Naive thymus-derived CD4-positive, alpha-beta T cell (primary cell): ENCODE measurements at regions of chr15 and their contacts with region 1.

Region 1: GRCh38 chr15:65286704-65287519 is at the start of gene PARP16:
- DNase-seq: peak; percentile 85 to 95 (median 87)
- ATAC-seq: peak; percentile 97
- H3K4me3 ChIP-seq: peak within 1 kb of the TSS; percentile 68
- H3K4me3 Mint-ChIP-seq: peak within 1 kb of the TSS; percentile 70 to 92 (median 90)
- H3K27ac ChIP-seq: peak within 1 kb of the TSS; percentile 87
- H3K27ac Mint-ChIP-seq: peak within 1 kb of the TSS; percentile 76 to 94 (median 87)
- H3K4me1 ChIP-seq: peaks cover 15 to 18% of the 10 kb centered on the region in 2 donors
- H3K4me1 Mint-ChIP-seq: peaks cover 30 to 60% (median 41%) of the 10 kb centered on the region in 7 donors
- H3K27me3 ChIP-seq: no peaks in the 10 kb centered on the region
- H3K27me3 Mint-ChIP-seq: no peaks in the 10 kb centered on the region
- total RNA-seq, gene PARP16: 10.9 to 21.5 (median 15.7) TPM

Region 2: GRCh38 chr15:64841258-64842095 is 445.4 kb before region 1 on chr15 and contains the start of gene PLEKHO2:
- CTCF ChIA-PET with region 1: no interaction called
- POLR2A ChIA-PET with region 1: no interaction called
- intact Hi-C with region 1: loop called in 1 of 2 experiments (anchors 5 kb)
- DNase-seq: peak; percentile 70 to 88 (median 80)
- ATAC-seq: peak; percentile 85
- H3K4me3 ChIP-seq: peak within 1 kb of the TSS; percentile 65
- H3K4me3 Mint-ChIP-seq: peak within 1 kb of the TSS; percentile 85 to 98 (median 96)
- H3K27ac ChIP-seq: peak within 1 kb of the TSS; percentile 81
- H3K27ac Mint-ChIP-seq: peak within 1 kb of the TSS; percentile 83 to 96 (median 91)
- H3K4me1 ChIP-seq: peaks cover 48 to 62% of the 10 kb centered on the region in 2 donors
- H3K4me1 Mint-ChIP-seq: peaks cover 63 to 89% (median 86%) of the 10 kb centered on the region in 7 donors
- H3K27me3 ChIP-seq: no peaks in the 10 kb centered on the region
- H3K27me3 Mint-ChIP-seq: no peaks in the 10 kb centered on the region
- total RNA-seq, gene PLEKHO2: 8.6 to 52.3 (median 14.0) TPM

Region 3: GRCh38 chr15:65049418-65049840 is 237.5 kb before region 1 on chr15:
- CTCF ChIA-PET with region 1: no interaction called
- POLR2A ChIA-PET with region 1: no interaction called
- intact Hi-C with region 1: loop called in 1 of 2 experiments (anchors 1 kb)
- DNase-seq: peak; percentile 59 to 89 (median 83)
- ATAC-seq: peak; percentile 99
- H3K4me3 ChIP-seq: peak overlapping the region; percentile 62
- H3K4me3 Mint-ChIP-seq: peak overlapping the region; percentile 63 to 88 (median 74)
- H3K27ac ChIP-seq: no peak overlapping the region
- H3K27ac Mint-ChIP-seq: peak overlapping the region in 7 of 9 donors; percentile 10 to 80 (median 63)
- H3K4me1 ChIP-seq: peaks cover 4 to 11% of the 10 kb centered on the region in 2 donors
- H3K4me1 Mint-ChIP-seq: peaks cover 0 to 18% (median 12%) of the 10 kb centered on the region in 7 donors
- H3K27me3 ChIP-seq: no peaks in the 10 kb centered on the region
- H3K27me3 Mint-ChIP-seq: peaks cover 0 to 10% (median 0%) of the 10 kb centered on the region in 5 donors

Region 4: GRCh38 chr15:65077981-65078352 is 208.9 kb before region 1 on chr15:
- CTCF ChIA-PET with region 1: no interaction called
- POLR2A ChIA-PET with region 1: no interaction called
- intact Hi-C with region 1: no loop called
- DNase-seq: peak in 8 of 9 donors; percentile 18 to 54 (median 39)
- ATAC-seq: peak; percentile 74
- H3K4me3 ChIP-seq: no peak overlapping the region
- H3K4me3 Mint-ChIP-seq: peak overlapping the region in 7 of 10 donors; percentile 11 to 80 (median 52)
- H3K27ac ChIP-seq: no peak overlapping the region
- H3K27ac Mint-ChIP-seq: peak overlapping the region in 1 of 9 donors; percentile 74
- H3K4me1 ChIP-seq: peaks cover 0 to 11% of the 10 kb centered on the region in 2 donors
- H3K4me1 Mint-ChIP-seq: peaks cover 13 to 25% (median 19%) of the 10 kb centered on the region in 7 donors
- H3K27me3 ChIP-seq: no peaks in the 10 kb centered on the region
- H3K27me3 Mint-ChIP-seq: peaks cover 16 to 35% (median 32%) of the 10 kb centered on the region in 5 donors

Region 5: DNA sequence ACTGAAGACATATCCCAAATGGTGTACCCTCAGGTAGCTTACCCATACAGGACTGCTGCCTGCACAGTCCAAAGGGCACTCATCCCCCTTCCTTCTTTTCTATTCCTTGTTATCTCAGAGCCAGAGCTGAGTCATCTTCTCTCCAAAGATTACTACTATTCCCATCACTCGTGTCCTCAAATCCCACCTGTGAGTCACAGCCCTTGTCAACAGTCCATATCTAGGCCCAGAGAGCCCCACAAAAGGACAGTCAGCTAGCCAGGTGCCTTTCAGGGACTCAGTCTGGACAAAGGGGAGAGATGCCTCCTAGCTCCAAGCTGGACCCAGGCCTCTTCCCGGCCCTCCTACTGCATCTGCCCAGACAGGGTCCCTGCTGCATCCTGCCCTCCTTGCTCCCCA is 11.2 kb before region 1 on chr15:
- CTCF ChIA-PET with region 1: interaction called, 9 read pairs
- POLR2A ChIA-PET with region 1: interaction called, 25 read pairs
- intact Hi-C with region 1: no loop called
- DNase-seq: no peak
- ATAC-seq: peak; percentile 27
- H3K4me3 ChIP-seq: no peak overlapping the region
- H3K4me3 Mint-ChIP-seq: peak overlapping the region in 7 of 10 donors; percentile 26 to 73 (median 67)
- H3K27ac ChIP-seq: peak overlapping the region; percentile 67
- H3K27ac Mint-ChIP-seq: peak overlapping the region in 8 of 9 donors; percentile 63 to 92 (median 78)
- H3K4me1 ChIP-seq: peaks cover 0 to 24% of the 10 kb centered on the region in 2 donors
- H3K4me1 Mint-ChIP-seq: peaks cover 19 to 80% (median 59%) of the 10 kb centered on the region in 7 donors
- H3K27me3 ChIP-seq: no peaks in the 10 kb centered on the region
- H3K27me3 Mint-ChIP-seq: no peaks in the 10 kb centered on the region

Region 6: DNA sequence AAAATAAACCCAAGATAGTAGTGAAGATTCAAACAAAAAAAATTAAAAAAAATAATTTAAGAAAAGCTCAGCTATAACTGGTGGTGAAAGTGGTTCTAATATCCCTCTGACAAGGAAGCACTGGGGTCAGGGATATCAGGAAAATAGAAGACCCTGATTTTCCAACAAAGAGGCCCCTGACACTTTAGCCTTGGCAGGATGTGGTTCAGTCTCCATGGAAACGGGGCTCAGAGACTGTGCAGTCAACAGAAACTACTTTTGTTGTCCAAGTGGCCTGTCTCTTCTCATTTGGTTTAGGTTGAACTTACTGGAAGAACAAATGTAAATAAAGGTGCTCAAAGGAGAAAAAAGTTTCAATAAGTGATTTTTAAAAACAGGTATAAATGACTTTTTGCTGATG is 296.8 kb after region 1 on chr15:
- CTCF ChIA-PET with region 1: no interaction called
- POLR2A ChIA-PET with region 1: no interaction called
- intact Hi-C with region 1: no loop called
- DNase-seq: peak in 8 of 9 donors; percentile 28 to 69 (median 55)
- ATAC-seq: peak; percentile 75
- H3K4me3 ChIP-seq: no peak overlapping the region
- H3K4me3 Mint-ChIP-seq: peak overlapping the region in 9 of 10 donors; percentile 9 to 73 (median 67)
- H3K27ac ChIP-seq: peak overlapping the region; percentile 61
- H3K27ac Mint-ChIP-seq: peak overlapping the region; percentile 89 to 95 (median 93)
- H3K4me1 ChIP-seq: peaks cover 11 to 20% of the 10 kb centered on the region in 2 donors
- H3K4me1 Mint-ChIP-seq: peaks cover 11 to 50% (median 40%) of the 10 kb centered on the region in 7 donors
- H3K27me3 ChIP-seq: no peaks in the 10 kb centered on the region
- H3K27me3 Mint-ChIP-seq: no peaks in the 10 kb centered on the region

Region 7: DNA sequence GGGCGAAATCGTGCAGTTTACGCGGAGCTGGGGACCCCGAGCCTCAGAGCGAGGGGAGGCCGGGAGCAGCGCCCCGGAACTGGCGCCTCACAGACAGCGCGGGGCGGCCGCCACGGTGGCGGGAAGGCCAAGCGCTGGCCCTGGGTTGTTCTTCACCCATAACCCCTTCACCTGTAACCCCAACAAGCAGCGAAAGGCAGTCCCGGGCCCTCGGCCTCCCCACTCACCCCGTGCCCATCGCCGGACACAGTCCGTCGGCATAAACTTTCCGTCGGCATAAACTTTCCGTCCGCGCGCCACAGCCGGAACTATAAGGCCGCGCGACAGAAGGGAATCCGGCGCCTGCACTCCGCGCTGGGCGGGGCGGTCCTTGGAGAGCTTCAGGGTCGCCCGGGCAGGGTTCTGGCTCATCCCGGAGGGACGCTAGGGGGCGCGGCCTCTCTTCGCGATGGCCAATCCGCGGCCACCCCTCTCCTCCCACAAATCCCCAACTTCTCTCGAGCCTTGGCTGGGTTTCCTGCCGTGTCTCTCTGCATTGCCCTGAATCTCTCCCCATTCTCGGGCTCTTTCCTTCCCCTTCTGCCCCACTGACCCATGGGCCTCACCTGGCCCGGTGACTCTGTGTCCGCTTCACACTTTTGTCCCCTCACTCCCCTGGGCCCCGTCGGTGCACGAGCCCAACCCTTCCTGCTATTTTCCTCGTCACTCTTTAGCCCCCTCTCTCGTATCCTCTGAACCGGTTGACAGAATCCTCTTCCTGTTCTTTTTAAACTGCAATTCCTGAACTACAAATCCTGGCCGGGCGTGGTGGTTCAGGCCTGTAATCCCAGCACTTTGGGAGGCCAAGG is 324.2 kb after region 1 on chr15 and contains the start of gene INTS14:
- CTCF ChIA-PET with region 1: no interaction called
- POLR2A ChIA-PET with region 1: no interaction called
- intact Hi-C with region 1: loop called in 1 of 2 experiments (anchors 2 kb)
- DNase-seq: peak; percentile 74 to 96 (median 80)
- ATAC-seq: peak; percentile 99
- H3K4me3 ChIP-seq: peak within 1 kb of the TSS; percentile 97
- H3K4me3 Mint-ChIP-seq: peak within 1 kb of the TSS; percentile 95 to 99 (median 98)
- H3K27ac ChIP-seq: peak within 1 kb of the TSS; percentile 89
- H3K27ac Mint-ChIP-seq: peak within 1 kb of the TSS; percentile 97 to 100 (median 98)
- H3K4me1 ChIP-seq: peaks cover 18 to 21% of the 10 kb centered on the region in 2 donors
- H3K4me1 Mint-ChIP-seq: peaks cover 11 to 44% (median 32%) of the 10 kb centered on the region in 7 donors
- H3K27me3 ChIP-seq: no peaks in the 10 kb centered on the region
- H3K27me3 Mint-ChIP-seq: no peaks in the 10 kb centered on the region
- total RNA-seq, gene INTS14: 19.1 to 38.3 (median 35.9) TPM